Natural killer cell (primary cell): ENCODE measurements at regions of chr15 and their contacts with region 1.

Region 1: DNA sequence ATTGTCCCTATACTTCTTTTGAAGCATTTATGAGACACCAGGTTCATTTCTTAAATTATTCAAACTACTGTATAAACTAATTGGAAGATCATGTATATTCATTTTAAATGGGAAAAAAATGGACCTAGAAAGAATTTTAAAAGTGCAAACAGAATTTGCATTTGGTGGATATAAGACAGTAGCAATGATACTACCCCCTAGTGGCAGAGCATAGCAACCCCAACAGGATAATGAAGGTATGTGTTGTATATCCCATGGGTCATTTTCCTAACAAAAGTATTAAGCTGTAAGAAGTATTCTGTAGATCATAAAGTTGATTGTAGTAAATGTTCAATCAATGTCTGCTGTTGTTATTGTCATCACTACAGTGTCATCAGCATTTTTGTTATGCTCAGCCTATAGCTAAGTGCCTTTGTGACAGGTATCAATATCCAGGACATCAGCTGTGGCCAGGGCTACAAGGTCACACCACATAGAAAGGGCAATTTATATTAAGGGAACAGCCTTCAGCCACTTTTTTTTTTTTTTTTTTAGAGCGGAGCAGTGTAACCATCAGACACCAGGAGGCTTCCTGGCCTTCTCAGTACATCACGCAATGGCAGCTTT is 175.8 kb downstream of the FOXB1 start:
- DNase-seq: peak in 1 of 2 donors; percentile 75
- ATAC-seq: peak; percentile 44 to 74 (median 64)
- H3K4me3 ChIP-seq: no peak overlapping the region
- H3K4me3 Mint-ChIP-seq: no peak overlapping the region
- H3K27ac ChIP-seq: no peak overlapping the region
- H3K27ac Mint-ChIP-seq: no peak overlapping the region
- H3K4me1 ChIP-seq: no peaks in the 10 kb centered on the region
- H3K4me1 Mint-ChIP-seq: no peaks in the 10 kb centered on the region
- H3K27me3 ChIP-seq: no peaks in the 10 kb centered on the region
- H3K27me3 Mint-ChIP-seq: peaks cover 21 to 56% of the 10 kb centered on the region in 2 donors
- CTCF ChIP-seq: peak; percentile 91

Region 2: GRCh38 chr15:59725172-59725486 is 454.8 kb before region 1 on chr15:
- intact Hi-C with region 1: loop called (anchors 1 kb)
- DNase-seq: no peak
- ATAC-seq: no peak
- H3K4me3 ChIP-seq: no peak overlapping the region
- H3K4me3 Mint-ChIP-seq: no peak overlapping the region
- H3K27ac ChIP-seq: no peak overlapping the region
- H3K27ac Mint-ChIP-seq: no peak overlapping the region
- H3K4me1 ChIP-seq: no peaks in the 10 kb centered on the region
- H3K4me1 Mint-ChIP-seq: no peaks in the 10 kb centered on the region
- H3K27me3 ChIP-seq: no peaks in the 10 kb centered on the region
- H3K27me3 Mint-ChIP-seq: peaks cover 10 to 24% of the 10 kb centered on the region in 2 donors
- CTCF ChIP-seq: no peak